Activated B cell treated with CpG ODN at 0.5 μM for 24 hours (primary cell): ENCODE measurements at regions of chr4 and their contacts with region 1.

Region 1: GRCh38 chr4:121736735-121737351 is 28.1 kb downstream of the SMIM43 start:
- DNase-seq: no peak
- ATAC-seq: no peak
- H3K4me3 Mint-ChIP-seq: no peak overlapping the region
- H3K27ac Mint-ChIP-seq: no peak overlapping the region
- H3K4me1 Mint-ChIP-seq: no peaks in the 10 kb centered on the region
- H3K27me3 Mint-ChIP-seq: peaks cover 24% of the 10 kb centered on the region
- CTCF ChIP-seq: no peak

Region 2: DNA sequence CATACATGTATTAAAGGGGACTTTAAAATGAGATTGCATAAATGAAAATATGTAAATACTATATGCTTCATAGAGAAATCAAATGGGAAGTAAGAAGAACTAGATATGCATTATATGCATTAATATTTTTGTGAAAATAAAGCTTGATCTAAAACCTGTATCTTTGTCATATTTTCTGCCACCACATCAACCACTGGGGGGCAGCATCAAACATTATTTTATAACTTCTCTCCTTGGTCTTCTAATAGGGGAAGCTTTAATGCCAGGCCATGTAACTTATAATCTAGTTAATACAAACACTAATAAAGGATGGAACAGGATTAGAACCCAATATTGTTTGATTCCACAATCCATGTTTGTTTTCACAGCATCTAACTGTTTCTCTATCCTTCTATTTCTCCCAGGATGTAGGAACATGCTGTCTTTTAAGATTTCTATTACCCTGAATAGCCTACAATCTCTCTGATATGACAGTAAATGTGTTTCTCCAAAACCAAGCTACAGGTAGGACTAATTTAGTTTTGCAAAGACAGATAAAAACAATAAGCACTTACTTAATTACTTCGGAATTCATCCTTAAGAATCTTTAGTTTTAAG is 366.0 kb before region 1 on chr4:
- CTCF ChIA-PET with region 1: interaction called, 6 read pairs
- POLR2A ChIA-PET with region 1: no interaction called
- intact Hi-C with region 1: loop called (anchors 1 kb)
- DNase-seq: no peak
- ATAC-seq: no peak
- H3K4me3 Mint-ChIP-seq: no peak overlapping the region
- H3K27ac Mint-ChIP-seq: no peak overlapping the region
- H3K4me1 Mint-ChIP-seq: no peaks in the 10 kb centered on the region
- H3K27me3 Mint-ChIP-seq: no peaks in the 10 kb centered on the region
- CTCF ChIP-seq: no peak

Region 3: DNA sequence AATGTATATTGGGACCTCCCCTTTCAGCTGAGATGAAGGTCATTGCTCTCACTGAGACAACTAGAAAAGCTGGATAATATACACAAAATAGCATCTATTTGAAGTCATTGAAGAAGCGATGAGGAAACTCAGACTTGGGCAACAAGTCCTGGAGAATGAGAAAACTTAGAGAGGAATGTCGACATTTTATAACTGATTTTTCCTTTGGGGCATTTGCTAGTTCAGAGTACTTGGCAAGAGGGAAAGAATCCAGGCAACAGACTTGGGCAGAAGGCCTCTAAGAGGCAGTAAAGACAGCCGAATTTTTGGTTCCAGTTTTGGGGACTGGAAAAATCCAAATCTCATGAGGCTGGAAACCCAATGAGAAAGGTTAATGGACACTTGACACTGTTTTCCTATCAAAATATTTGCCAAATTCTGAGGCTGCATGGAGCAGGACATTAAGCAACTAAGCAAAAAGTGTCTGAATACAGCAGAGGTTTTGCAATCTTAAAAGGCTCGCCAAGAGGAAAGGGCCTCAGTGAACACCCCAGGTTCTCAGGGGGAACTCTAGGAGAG is 19.1 kb before region 1 on chr4:
- CTCF ChIA-PET with region 1: no interaction called
- POLR2A ChIA-PET with region 1: no interaction called
- intact Hi-C with region 1: no loop called
- DNase-seq: no peak
- ATAC-seq: no peak
- H3K4me3 Mint-ChIP-seq: no peak overlapping the region
- H3K27ac Mint-ChIP-seq: no peak overlapping the region
- H3K4me1 Mint-ChIP-seq: no peaks in the 10 kb centered on the region
- H3K27me3 Mint-ChIP-seq: peaks cover 28% of the 10 kb centered on the region
- CTCF ChIP-seq: no peak